ENCODE measurements at regions of chr19 and their contacts with region 1.

Region 1: DNA sequence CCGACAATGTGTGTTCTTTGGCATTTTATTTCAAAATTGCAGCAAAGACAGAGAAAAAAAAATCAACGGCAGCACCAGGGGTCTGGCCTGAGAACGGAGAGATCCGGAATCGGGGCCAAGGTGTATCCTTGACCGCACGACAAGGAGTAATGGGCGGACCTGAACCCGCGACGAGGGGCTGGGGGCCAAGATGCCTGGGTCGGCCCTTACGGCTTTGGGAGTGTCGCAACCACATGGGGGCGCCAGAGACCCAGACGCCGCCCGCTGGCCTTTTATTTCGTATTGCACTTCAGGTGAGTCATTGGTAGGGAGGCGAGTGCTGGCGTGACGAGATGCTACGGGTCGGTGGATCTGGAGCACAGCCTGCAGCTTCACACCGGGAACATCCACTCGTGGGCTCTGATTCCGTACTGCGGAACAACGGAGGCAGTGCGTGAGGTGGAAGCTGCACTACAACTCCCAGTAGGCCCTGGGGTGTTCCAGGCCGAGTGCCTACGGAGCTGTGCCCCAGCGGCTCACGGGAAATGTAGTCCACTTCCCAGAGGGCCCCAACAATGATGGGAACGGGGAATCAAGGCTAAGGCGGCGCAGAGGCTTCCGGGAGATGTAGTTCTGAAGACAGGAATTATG is 15.7 kb downstream of the BCAT2 start:
- DNase-seq: peak; percentile 92
- ATAC-seq: peak; percentile 99
- H3K4me3 Mint-ChIP-seq: peak overlapping the region; percentile 82
- H3K27ac Mint-ChIP-seq: peak overlapping the region; percentile 82
- H3K4me1 Mint-ChIP-seq: peaks cover 11% of the 10 kb centered on the region
- H3K27me3 Mint-ChIP-seq: no peaks in the 10 kb centered on the region

Region 2: GRCh38 chr19:48646001-48646721 is 149.0 kb before region 1 on chr19 and contains the start of gene CA11:
- CTCF ChIA-PET with region 1: interaction called, 10 read pairs
- DNase-seq: peak; percentile 94
- ATAC-seq: peak; percentile 90
- H3K4me3 Mint-ChIP-seq: peak within 1 kb of the TSS; percentile 74
- H3K27ac Mint-ChIP-seq: peak within 1 kb of the TSS; percentile 77
- H3K4me1 Mint-ChIP-seq: peaks cover 33% of the 10 kb centered on the region
- H3K27me3 Mint-ChIP-seq: peaks cover 2% of the 10 kb centered on the region
- total RNA-seq, gene CA11: 6.0 to 7.2 TPM

Region 3: DNA sequence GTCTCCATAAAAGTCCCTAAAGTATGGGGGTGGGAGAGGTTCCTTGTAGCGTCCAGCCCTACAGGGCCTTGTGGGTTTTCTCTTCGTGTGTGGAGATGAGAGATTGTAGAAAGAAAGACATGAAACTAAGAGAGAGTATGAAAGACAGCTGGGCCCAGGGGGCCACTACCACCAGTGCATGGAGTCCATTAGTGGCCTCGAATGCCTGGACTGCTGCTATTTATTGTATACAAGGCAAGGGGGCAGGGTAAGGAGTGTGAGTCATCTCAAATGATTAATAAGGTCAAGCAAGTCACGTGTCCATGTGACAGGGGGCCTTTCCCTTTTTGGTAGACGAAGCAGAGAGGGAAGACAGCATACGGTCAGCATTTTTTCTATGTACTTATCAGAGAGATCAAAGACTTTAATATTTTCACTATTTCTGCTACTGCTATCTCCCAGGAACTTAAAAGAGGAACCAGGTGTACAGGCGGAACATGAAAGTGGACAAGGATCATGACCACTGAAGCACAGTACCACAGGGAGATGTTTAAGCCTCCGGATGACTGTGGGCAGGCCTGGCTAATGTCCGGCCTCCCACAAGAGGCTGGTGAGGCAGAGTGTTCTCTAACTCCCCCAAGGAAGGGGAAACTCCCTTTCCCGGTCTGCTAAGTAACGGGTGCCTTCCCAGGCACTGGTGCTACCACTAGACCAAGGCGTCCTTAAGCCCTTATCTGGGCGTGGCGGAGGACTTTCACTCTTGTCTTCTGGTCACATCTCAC is 14.4 kb before region 1 on chr19:
- CTCF ChIA-PET with region 1: interaction called, 35 read pairs
- DNase-seq: no peak
- ATAC-seq: no peak
- H3K4me3 Mint-ChIP-seq: no peak overlapping the region
- H3K27ac Mint-ChIP-seq: no peak overlapping the region
- H3K4me1 Mint-ChIP-seq: peaks cover 6% of the 10 kb centered on the region
- H3K27me3 Mint-ChIP-seq: peaks cover 25% of the 10 kb centered on the region

Region 4: GRCh38 chr19:48812094-48812929 is 17.1 kb after region 1 on chr19:
- CTCF ChIA-PET with region 1: interaction called, 92 read pairs
- DNase-seq: peak; percentile 81
- ATAC-seq: peak; percentile 67
- H3K4me3 Mint-ChIP-seq: peak overlapping the region; percentile 71
- H3K27ac Mint-ChIP-seq: peak overlapping the region; percentile 74
- H3K4me1 Mint-ChIP-seq: peaks cover 27% of the 10 kb centered on the region
- H3K27me3 Mint-ChIP-seq: no peaks in the 10 kb centered on the region

Region 5: GRCh38 chr19:48835734-48836088 is 40.5 kb after region 1 on chr19:
- CTCF ChIA-PET with region 1: interaction called, 65 read pairs
- DNase-seq: peak; percentile 97
- ATAC-seq: peak; percentile 92
- H3K4me3 Mint-ChIP-seq: peak overlapping the region; percentile 76
- H3K27ac Mint-ChIP-seq: peak overlapping the region; percentile 86
- H3K4me1 Mint-ChIP-seq: peaks cover 16% of the 10 kb centered on the region
- H3K27me3 Mint-ChIP-seq: no peaks in the 10 kb centered on the region

Region 6: DNA sequence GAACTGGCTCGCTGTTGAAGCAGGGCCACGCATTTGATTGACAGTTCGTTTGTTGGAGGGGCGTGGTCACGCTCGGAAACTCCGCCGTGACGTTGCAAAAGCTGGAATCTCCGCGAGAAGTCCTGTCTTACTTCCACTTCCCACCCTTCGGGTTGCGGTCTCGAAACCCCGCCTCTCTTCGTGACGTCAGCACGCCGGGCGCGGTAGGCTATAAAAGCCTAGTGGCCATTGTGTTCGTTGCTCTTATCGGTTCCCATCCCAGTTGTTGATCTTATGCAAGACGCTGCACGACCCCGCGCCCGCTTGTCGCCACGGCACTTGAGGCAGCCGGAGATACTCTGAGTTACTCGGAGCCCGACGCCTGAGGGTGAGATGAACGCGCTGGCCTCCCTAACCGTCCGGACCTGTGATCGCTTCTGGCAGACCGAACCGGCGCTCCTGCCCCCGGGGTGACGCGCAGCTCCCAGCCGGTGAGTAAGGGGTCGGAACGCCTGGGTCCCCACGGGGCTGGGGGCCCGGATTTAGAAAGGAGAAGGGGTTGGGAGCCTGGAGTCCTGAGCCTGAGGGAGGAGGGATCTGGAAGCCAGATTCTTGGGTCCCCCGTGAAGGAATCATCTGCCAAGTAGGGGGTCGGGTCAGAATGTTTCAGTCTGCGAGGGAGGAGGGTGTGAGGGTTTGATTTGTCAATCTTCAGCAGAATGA is 77.2 kb after region 1 on chr19 and contains the start of gene PPP1R15A:
- CTCF ChIA-PET with region 1: interaction called, 11 read pairs
- DNase-seq: peak; percentile 99
- ATAC-seq: peak; percentile 35
- H3K4me3 Mint-ChIP-seq: peak within 1 kb of the TSS; percentile 98
- H3K27ac Mint-ChIP-seq: peak within 1 kb of the TSS; percentile 100
- H3K4me1 Mint-ChIP-seq: peaks cover 39% of the 10 kb centered on the region
- H3K27me3 Mint-ChIP-seq: peaks cover 5% of the 10 kb centered on the region
- total RNA-seq, gene PPP1R15A: 32.1 to 89.7 TPM

Region 7: DNA sequence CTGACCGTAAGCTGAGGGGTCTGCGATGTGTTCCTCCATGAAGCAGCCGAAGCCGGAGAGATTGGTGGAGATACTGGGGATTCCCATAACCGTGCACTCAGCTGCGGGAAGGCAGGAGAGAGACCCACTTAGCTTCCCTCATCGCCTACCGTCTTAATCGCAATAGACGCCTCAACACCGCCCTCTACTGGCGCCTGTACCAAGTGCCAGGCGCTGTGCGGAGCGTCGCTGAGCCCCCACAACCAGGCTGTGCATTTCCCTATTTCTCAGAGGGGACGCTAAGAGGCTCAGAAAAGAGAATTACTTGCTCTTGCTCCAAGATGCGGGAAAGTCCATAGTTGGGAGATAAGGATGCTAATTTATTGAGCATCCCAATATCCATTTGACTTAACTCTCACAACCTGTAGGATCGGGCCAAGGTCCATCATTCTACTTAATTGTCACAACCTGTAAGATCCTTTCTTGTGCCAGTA is 175.8 kb after region 1 on chr19:
- CTCF ChIA-PET with region 1: interaction called, 28 read pairs
- DNase-seq: peak; percentile 87
- ATAC-seq: peak; percentile 52
- H3K4me3 Mint-ChIP-seq: no peak overlapping the region
- H3K27ac Mint-ChIP-seq: no peak overlapping the region
- H3K4me1 Mint-ChIP-seq: peaks cover 31% of the 10 kb centered on the region
- H3K27me3 Mint-ChIP-seq: no peaks in the 10 kb centered on the region

Region 8: DNA sequence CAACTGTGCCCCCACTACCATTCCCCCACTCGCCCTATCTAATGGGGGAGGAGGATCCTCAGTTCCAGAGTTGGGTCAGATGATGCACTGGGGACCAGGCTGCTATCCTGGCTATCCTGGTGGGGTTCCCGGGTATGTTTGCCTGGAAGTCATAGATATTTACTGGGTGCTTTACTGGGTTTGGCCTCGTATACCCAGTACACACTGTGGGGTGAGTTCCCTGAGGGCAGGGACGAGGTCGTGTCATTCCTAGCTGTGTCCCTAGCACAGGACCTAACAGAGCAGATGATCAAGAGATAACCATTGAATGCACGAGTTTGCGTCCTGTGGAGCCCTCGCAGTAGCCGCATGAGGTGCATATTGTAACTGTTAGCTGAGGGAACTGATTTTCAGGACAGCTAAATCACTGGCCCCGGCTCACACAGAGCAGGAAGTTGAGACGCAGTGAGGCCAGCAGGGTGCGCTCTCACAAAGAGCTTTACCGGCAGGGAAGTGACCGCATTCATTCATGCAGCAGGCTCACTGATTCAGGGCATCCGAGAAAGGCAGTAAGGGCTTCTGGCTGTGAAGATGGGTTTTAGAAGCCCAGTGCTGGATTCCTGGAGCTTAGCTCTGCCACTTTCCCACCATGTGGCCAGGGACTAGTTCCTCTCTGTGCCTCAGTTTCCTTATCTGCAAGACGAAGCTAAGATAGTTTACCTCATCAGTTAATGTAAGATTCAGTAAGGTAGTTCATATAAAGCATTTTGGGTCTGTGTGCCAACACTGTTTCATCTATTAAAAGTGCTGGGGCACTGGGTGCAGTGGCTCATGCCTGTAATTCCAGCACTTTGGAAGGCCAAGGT is 204.5 kb after region 1 on chr19:
- CTCF ChIA-PET with region 1: no interaction called
- DNase-seq: peak; percentile 81
- ATAC-seq: peak; percentile 84
- H3K4me3 Mint-ChIP-seq: no peak overlapping the region
- H3K27ac Mint-ChIP-seq: no peak overlapping the region
- H3K4me1 Mint-ChIP-seq: peaks cover 25% of the 10 kb centered on the region
- H3K27me3 Mint-ChIP-seq: no peaks in the 10 kb centered on the region